ENCODE measurements at regions of chr13 and their contacts with region 1.

Region 1: GRCh38 chr13:79246578-79246949 is 159.5 kb downstream of the RBM26 start:
- DNase-seq: no peak
- ATAC-seq: no peak
- H3K4me3 Mint-ChIP-seq: no peak overlapping the region
- H3K27ac Mint-ChIP-seq: no peak overlapping the region
- H3K4me1 Mint-ChIP-seq: peaks cover 7% of the 10 kb centered on the region
- H3K27me3 Mint-ChIP-seq: no peaks in the 10 kb centered on the region
- CTCF ChIP-seq: no peak

Region 2: DNA sequence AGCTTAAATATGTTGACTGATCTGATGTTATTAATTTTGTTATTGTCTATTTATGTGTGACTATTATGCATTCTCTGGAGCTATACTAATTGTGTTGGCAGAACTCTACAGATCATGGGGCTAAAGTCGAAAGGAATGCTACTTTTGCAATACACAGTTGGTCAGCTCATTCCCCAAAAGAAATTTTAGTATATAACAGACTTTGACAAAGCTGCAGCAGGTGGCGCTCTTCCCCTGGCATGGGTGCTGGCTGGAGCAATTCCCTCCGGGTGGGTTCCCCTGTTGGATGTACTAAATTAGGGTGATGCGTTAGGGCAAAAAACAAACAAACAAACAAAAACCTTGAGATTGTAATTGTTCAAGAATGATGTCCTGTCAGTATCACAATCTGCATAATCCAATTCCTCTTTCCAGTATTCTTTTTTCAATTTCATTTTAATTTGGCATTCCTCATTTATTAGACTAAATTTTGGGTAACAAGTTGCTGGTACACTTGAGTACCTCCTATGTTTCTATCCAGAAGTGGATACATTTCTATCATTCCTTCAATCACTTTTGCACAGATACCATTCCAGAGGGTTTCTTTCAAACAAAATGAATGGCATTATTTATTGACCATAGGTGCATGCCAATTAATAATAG is 1005.2 kb before region 1 on chr13:
- CTCF ChIA-PET with region 1: no interaction called
- POLR2A ChIA-PET with region 1: no interaction called
- intact Hi-C with region 1: loop called (anchors 2 kb)
- DNase-seq: no peak
- ATAC-seq: no peak
- H3K4me3 Mint-ChIP-seq: no peak overlapping the region
- H3K27ac Mint-ChIP-seq: no peak overlapping the region
- H3K4me1 Mint-ChIP-seq: no peaks in the 10 kb centered on the region
- H3K27me3 Mint-ChIP-seq: no peaks in the 10 kb centered on the region
- CTCF ChIP-seq: no peak

Region 3: DNA sequence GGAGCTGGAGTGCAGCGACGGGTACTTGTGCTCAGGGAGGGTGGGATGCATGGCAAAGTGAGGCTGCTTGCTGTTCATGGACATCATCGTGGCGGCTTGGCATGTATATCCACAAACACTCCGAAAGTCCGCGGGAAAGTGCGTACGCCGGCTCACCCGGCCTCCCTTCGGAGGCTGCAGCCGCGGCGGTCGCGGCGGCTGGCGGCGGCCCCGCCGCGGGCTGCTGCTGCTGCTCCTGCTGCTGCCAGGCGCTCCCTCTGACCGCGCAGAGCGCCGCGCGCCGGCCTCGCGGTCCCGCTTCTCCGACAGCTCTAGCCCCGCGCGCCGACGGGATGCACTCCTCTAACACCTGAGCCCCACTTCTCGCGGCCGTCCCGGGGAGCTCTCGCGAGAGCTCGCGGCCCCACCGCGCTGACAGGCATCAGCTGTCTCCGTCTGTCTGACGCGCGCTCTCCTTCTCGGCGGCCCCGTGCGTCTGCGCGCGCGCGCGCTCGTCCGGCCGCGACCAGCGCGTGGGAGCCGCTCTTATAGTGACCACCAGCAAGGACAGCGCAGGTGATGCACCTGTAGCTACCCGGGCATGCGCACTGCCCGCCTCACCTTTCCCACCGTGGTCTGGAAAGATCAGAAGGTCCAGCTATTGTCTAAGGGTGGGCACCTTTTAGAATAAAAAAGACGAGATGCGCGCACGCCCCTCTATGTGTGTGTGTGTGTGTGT is 643.2 kb before region 1 on chr13 and contains the start of gene POU4F1:
- CTCF ChIA-PET with region 1: no interaction called
- POLR2A ChIA-PET with region 1: no interaction called
- intact Hi-C with region 1: loop called (anchors 5 kb)
- DNase-seq: no peak
- ATAC-seq: peak; percentile 80
- H3K4me3 Mint-ChIP-seq: peak within 1 kb of the TSS; percentile 77
- H3K27ac Mint-ChIP-seq: peak within 1 kb of the TSS; percentile 71
- H3K4me1 Mint-ChIP-seq: peaks cover 54% of the 10 kb centered on the region
- H3K27me3 Mint-ChIP-seq: peaks cover 74% of the 10 kb centered on the region
- CTCF ChIP-seq: no peak
- total RNA-seq, gene POU4F1: 0.04 and 0.07 TPM in 2 replicates